ENCODE measurements at regions of chr6 and their contacts with region 1.

Region 1: GRCh38 chr6:157323255-157323965 is at the start of gene TMEM242:
- DNase-seq: peak; percentile 94
- H3K4me3 Mint-ChIP-seq: peak within 1 kb of the TSS; percentile 94
- H3K27ac Mint-ChIP-seq: peak within 1 kb of the TSS; percentile 80
- H3K4me1 Mint-ChIP-seq: peaks cover 20% of the 10 kb centered on the region
- H3K27me3 Mint-ChIP-seq: peaks cover 23% of the 10 kb centered on the region
- total RNA-seq, gene TMEM242: 9.3 to 10.3 TPM

Region 2: DNA sequence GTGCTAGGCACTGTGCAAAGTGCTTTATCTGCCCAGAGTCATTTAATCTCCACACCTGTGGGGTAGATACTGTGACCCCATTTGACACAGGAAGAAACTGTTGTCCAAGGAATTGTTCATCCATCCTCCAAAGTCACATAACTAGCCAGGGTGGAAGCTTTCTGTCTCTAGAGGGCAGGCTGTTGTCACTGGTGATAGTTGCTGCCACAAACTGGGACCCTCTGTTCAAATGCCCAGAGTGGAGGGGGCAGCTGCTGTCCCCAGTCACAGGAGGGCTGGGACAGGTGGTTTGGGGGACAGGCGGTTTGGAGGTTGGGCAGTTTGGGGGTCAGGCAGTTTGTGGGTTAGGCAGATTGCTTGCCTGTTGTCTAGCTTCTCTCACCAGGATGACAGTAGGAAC is 16.0 kb after region 1 on chr6:
- CTCF ChIA-PET with region 1: interaction called, 38 read pairs
- intact Hi-C with region 1: no loop called
- DNase-seq: no peak
- H3K4me3 Mint-ChIP-seq: no peak overlapping the region
- H3K27ac Mint-ChIP-seq: no peak overlapping the region
- H3K4me1 Mint-ChIP-seq: no peaks in the 10 kb centered on the region
- H3K27me3 Mint-ChIP-seq: peaks cover 41% of the 10 kb centered on the region

Region 3: DNA sequence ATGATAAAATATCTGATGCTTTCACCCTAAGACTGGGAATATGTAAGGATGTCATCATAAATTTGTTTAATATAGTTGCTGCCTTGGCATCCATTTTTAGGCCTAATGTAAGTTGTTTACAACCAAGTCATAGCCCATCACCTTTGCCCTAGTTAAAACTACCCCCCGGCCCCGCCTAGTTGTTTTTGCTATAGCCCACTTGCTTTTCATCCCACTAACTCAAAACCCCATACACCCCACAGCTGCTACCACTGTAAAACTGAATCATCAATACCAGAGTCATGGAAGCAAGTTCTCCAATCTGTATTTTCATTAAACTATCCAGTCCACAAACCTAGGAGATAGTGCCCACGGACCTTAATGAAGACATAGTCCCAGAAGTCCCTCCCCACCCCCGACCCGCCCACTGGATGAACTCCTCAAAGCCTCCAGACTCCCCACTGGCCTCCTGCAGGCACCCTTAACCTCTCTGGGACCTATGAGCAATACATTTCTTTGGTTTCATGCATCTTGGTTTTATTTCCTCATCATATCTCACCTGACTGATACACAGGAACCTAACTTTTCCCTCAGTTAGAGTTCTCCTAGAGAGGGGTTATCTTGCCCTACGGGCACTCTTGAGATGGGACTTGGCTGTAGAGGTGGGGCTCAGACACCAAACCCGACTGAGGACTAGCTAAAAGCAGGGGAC is 45.1 kb after region 1 on chr6:
- CTCF ChIA-PET with region 1: no interaction called
- intact Hi-C with region 1: loop called (anchors 5 kb)
- DNase-seq: no peak
- H3K4me3 Mint-ChIP-seq: no peak overlapping the region
- H3K27ac Mint-ChIP-seq: no peak overlapping the region
- H3K4me1 Mint-ChIP-seq: peaks cover 20% of the 10 kb centered on the region
- H3K27me3 Mint-ChIP-seq: peaks cover 31% of the 10 kb centered on the region

Region 4: GRCh38 chr6:157379656-157380454 is 56.4 kb after region 1 on chr6:
- CTCF ChIA-PET with region 1: interaction called, 5 read pairs
- intact Hi-C with region 1: loop called (anchors 1 kb)
- DNase-seq: peak; percentile 92
- H3K4me3 Mint-ChIP-seq: peak overlapping the region; percentile 81
- H3K27ac Mint-ChIP-seq: peak overlapping the region; percentile 59
- H3K4me1 Mint-ChIP-seq: peaks cover 36% of the 10 kb centered on the region
- H3K27me3 Mint-ChIP-seq: peaks cover 12% of the 10 kb centered on the region

Region 5: DNA sequence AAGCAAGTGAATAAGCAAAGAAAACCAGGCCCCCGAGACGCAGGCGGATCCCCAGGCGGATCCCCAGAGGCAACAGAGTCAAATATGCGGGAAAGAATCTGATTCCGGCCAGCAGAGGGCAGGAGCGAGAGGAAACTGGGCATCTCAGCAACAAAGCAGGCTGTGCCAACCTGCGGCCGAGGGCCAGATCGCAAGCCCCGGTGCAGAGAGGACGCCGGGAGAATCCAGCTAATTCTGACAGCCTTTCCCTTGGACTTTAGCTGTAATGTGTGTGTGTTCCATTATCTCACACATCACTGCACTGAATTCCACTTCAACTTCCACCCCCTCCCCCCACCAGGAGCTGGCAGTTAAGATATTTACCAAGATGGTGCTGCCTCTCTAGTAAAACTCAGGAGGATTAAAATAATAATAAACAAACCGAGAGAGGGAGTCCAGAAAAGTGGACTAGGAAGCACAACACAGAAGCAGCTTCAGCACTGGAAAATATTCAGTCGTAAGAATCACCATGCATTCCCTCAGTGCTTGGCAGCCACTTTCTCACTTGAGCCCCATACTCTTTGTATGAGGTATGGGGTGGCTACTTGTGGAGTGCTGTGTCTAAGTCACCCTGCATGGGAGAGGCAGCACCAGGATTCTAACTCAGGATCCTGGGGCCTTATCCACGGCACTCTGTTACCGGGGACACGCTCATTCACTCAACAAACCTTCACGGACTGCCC is 433.5 kb after region 1 on chr6:
- CTCF ChIA-PET with region 1: interaction called, 3 read pairs
- intact Hi-C with region 1: loop called (anchors 5 kb)
- DNase-seq: peak; percentile 94
- H3K4me3 Mint-ChIP-seq: peak overlapping the region; percentile 28
- H3K27ac Mint-ChIP-seq: peak overlapping the region; percentile 89
- H3K4me1 Mint-ChIP-seq: peaks cover 93% of the 10 kb centered on the region
- H3K27me3 Mint-ChIP-seq: no peaks in the 10 kb centered on the region

Region 6: GRCh38 chr6:158168040-158168289 is 844.6 kb after region 1 on chr6 and contains the start of gene SERAC1:
- CTCF ChIA-PET with region 1: no interaction called
- intact Hi-C with region 1: loop called (anchors 1 kb)
- DNase-seq: no peak
- H3K4me3 Mint-ChIP-seq: peak within 1 kb of the TSS; percentile 91
- H3K27ac Mint-ChIP-seq: peak within 1 kb of the TSS; percentile 94
- H3K4me1 Mint-ChIP-seq: peaks cover 26% of the 10 kb centered on the region
- H3K27me3 Mint-ChIP-seq: no peaks in the 10 kb centered on the region
- total RNA-seq, gene SERAC1: 3.1 to 4.8 TPM